Activated CD4-positive, alpha-beta memory T cell treated with anti-CD3 and anti-CD28 coated beads for 36 hours (primary cell): ENCODE measurements at regions of chr12 and their contacts with region 1.

Region 1: GRCh38 chr12:92078167-92079053 is 67.2 kb downstream of the BTG1 start:
- DNase-seq: peak; percentile 36
- H3K4me3 Mint-ChIP-seq: no peak overlapping the region
- H3K27ac Mint-ChIP-seq: peak overlapping the region; percentile 70
- H3K4me1 Mint-ChIP-seq: peaks cover 60% of the 10 kb centered on the region
- H3K27me3 Mint-ChIP-seq: no peaks in the 10 kb centered on the region

Region 2: DNA sequence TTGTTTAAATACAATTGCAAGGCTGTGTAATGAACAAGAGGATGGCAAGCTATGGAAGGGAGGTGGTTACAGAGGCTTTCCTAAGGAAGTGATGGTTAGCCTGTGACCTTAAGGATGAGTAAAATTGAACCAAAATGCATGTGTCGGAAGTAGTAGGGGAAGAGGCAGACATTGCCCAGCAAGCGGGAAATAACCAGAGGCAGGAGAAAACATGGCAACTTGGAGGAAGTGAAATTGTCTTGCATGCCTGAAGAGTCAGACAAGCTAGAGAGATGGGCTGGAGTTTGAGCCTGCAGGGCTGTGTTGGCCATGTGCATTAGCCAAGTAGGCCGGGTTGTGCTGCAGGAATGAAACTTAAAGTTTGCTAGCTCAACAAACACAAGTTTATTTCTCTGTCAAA is 29.0 kb before region 1 on chr12:
- CTCF ChIA-PET with region 1: no interaction called
- POLR2A ChIA-PET with region 1: no interaction called
- intact Hi-C with region 1: loop called (anchors 1 kb)
- DNase-seq: no peak
- H3K4me3 Mint-ChIP-seq: no peak overlapping the region
- H3K27ac Mint-ChIP-seq: no peak overlapping the region
- H3K4me1 Mint-ChIP-seq: peaks cover 70% of the 10 kb centered on the region
- H3K27me3 Mint-ChIP-seq: no peaks in the 10 kb centered on the region

Region 3: DNA sequence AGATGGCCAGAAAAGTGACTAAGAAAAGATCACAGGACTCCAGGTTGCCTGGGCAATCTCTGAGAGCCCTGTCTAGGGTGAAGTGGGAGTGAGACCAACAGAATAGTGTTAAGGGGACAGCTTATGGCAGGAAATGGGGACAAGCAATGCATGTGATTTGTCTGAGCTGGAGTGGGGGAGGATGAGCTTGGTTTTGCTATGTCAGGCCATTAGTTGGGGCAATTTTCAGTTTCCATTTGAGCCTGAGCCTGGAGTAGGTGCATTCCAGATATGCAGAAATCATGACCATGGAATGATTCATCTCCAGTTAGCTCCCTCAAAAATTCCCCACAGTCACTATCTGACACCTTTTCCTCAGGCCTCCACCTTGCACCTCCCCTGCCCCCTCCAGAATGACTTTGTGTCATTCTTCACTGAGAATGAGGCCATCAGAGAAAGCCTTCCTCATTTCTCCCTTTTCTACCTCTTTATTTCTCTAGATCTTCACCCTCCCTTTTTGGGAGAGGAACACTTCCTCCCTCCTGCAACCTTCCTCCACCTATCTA is 473.5 kb after region 1 on chr12:
- CTCF ChIA-PET with region 1: no interaction called
- POLR2A ChIA-PET with region 1: no interaction called
- intact Hi-C with region 1: loop called (anchors 5 kb)
- DNase-seq: peak; percentile 75
- H3K4me3 Mint-ChIP-seq: no peak overlapping the region
- H3K27ac Mint-ChIP-seq: no peak overlapping the region
- H3K4me1 Mint-ChIP-seq: peaks cover 25% of the 10 kb centered on the region
- H3K27me3 Mint-ChIP-seq: no peaks in the 10 kb centered on the region